ENCODE measurements at regions of chr4 and their contacts with region 1.

Region 1: DNA sequence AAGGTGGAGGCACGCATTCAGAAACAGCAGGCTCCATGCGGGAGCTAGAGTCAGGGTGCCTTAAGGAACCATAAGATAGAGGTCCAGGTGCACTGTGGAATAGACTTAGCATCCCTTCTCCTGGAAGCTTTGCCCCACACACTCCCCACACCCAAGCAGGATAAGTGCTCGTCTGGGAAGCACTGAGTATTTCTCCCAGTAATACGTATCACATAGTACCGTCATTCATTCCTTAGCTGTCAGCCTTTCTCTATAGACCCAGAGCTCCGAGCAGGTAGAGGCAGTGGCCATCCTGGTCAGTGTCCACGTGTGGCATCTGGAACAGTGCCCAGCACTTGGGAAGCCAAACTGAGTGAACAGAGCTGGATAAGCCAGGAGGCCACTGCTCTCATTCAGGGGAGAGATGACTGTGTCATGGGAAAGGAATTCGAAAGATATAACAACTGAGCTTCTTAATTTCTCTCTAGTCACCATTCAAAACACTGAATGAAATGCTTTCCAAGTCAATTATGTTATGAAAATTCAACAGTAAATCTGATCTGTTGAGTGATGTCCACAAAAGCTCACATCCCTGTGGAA is 9.9 kb downstream of the APBB2 start:
- DNase-seq: peak; percentile 64 to 89
- H3K4me3 ChIP-seq: no peak overlapping the region
- H3K27ac ChIP-seq: peak overlapping the region; percentile 44; the same call in 1 of the 2 replicates
- H3K4me1 ChIP-seq: peaks cover 12% of the 10 kb centered on the region
- H3K27me3 ChIP-seq: no peaks in the 10 kb centered on the region
- CTCF ChIP-seq: no peak

Region 2: DNA sequence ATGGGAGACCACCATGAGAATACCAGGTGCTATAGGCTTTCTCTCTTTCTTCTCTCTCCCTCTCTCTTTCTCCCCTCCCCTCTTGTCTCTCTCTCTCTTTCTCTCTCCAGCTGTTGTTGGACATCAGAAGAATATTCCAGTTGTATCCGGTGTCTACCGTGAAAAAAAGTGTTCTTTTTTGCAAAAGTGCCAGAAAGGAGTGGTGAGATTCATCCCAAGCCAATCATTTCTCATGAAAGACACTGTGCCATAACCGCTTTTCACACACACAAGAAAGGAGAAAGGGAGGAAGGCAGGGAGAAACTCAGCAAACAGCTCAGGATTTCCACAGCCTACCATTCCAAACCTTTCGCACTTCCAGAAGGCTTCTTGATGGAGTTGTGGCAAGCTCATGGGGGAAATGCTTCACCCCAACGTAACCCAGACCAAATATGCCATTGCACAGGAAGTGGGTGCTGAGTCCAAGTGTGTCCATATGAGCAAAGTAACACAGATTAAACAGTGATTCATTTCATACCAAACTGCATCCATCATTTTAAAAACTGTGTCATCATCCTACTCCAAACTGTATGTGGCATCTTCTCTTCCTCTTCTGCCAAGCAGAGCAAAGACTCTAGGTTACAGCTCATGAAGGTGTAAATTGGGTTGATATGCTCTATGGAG is 214.1 kb before region 1 on chr4:
- CTCF ChIA-PET with region 1: no interaction called
- POLR2A ChIA-PET with region 1: interaction called, 20 read pairs
- intact Hi-C with region 1: no loop called
- DNase-seq: peak; percentile 45 to 85
- H3K4me3 ChIP-seq: no peak overlapping the region
- H3K27ac ChIP-seq: peak overlapping the region; percentile 92
- H3K4me1 ChIP-seq: peaks cover 39% of the 10 kb centered on the region
- H3K27me3 ChIP-seq: no peaks in the 10 kb centered on the region
- CTCF ChIP-seq: no peak

Region 3: DNA sequence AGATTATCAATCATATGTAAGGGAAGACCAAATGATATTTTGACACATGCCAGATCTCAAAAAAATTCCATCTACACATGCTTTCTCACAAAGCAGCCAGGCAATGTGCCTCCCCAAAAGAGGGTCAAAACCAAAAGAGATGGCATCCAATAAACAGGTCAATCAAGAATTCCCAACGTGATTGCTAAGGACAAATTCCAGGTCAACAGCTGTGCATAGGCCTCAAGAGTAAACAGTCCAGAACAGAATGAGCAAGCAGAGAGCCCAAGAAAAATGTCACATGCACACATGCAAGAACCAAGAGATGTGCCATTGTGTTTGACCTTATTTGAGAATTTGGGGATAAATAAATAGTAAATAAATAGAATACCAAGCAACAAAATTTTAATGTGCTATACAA is 126.9 kb before region 1 on chr4:
- CTCF ChIA-PET with region 1: no interaction called
- POLR2A ChIA-PET with region 1: interaction called, 14 read pairs
- intact Hi-C with region 1: no loop called
- DNase-seq: no peak
- H3K4me3 ChIP-seq: no peak overlapping the region
- H3K27ac ChIP-seq: no peak overlapping the region
- H3K4me1 ChIP-seq: no peaks in the 10 kb centered on the region
- H3K27me3 ChIP-seq: no peaks in the 10 kb centered on the region
- CTCF ChIP-seq: no peak

Region 4: DNA sequence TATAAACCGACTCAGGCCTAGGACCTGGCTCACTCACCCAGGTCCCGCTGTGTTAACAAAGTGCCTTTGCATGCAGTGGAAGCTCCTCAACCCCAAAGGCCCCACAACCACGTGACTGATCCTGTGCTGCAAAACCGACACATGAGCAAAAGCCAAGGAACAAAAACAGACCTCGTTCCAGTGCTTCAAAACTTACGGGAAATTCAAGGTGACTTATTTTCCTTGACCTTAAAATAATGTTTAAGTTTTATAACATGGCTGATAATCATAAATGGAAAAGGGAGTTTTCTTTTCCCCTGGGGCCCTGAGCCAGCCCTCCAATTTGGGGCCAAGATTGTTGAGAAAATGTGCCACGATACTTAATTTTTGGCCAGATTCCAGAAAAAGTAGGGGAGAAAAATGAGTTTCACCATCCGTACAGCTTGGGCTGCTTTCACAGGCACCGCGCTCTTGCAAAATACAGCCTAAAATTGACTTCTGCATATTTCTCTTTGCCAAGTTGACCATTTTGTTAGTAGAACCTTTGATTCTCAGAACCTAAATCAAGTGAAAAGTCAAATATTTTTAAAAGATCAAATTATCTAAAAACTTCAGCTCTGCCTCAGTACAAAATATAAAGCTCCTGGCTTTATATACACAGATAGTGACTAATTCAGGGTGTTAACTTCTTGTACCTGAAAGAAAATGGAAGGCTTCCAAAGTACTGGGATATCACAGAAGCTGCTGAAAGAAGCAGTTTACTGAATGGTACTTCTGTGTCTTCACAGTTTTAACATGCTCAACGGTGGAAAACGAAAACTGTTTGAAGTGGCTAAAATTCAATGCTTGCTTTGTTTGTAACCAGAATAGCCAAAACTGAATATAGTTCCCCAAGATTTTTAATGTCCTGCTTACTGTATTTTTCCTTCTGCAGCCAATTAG is 83.9 kb before region 1 on chr4:
- CTCF ChIA-PET with region 1: no interaction called
- POLR2A ChIA-PET with region 1: no interaction called
- intact Hi-C with region 1: loop called (anchors 10 kb)
- DNase-seq: no peak
- H3K4me3 ChIP-seq: no peak overlapping the region
- H3K27ac ChIP-seq: no peak overlapping the region
- H3K4me1 ChIP-seq: no peaks in the 10 kb centered on the region; the same call in 1 of the 2 replicates
- H3K27me3 ChIP-seq: no peaks in the 10 kb centered on the region
- CTCF ChIP-seq: no peak

Region 5: DNA sequence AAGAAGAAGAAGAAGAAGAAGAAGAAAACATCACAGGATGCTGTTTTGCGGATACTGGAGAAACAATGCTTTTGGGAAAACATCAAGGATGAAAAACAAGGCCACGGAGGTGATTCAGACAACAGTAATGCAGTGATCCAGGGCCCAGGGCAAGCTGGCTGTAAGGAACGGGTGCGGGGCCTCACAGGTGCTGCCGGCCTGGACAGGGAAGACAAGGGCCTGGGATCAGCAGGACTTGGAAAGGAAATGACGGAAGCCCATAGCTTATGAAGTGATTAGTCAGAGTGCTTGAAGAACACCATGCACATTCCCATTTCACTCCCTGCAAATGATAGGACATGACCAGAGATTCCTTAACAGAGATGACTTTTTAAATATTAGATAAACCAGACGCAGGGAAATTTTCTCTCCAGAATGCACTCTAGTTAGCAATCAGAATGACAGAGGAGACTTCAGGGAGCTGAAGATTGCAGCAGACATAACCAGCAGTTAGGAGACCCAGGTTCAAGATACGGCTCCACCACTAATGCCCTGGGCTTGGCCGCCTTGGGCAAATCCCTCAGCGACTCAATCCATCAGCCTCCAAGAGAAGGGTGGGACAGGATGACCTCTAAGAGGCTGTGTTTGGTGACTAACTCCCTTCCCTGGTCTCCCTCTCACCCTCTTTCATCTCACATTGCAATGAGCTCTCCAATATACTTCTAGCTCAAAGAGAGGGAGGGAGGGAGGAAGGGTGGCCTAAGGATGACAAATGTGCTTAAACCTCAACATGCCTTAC is 44.3 kb before region 1 on chr4:
- CTCF ChIA-PET with region 1: interaction called, 3 read pairs
- POLR2A ChIA-PET with region 1: interaction called, 3 read pairs
- intact Hi-C with region 1: loop called (anchors 2 kb)
- DNase-seq: peak; percentile 83 to 85
- H3K4me3 ChIP-seq: no peak overlapping the region; the same call in 1 of the 2 replicates
- H3K27ac ChIP-seq: peak overlapping the region; percentile 80
- H3K4me1 ChIP-seq: peaks cover 27% of the 10 kb centered on the region
- H3K27me3 ChIP-seq: no peaks in the 10 kb centered on the region
- CTCF ChIP-seq: no peak

Region 6: GRCh38 chr4:41185614-41186597 is 18.6 kb before region 1 on chr4:
- CTCF ChIA-PET with region 1: interaction called, 3 read pairs
- POLR2A ChIA-PET with region 1: interaction called, 4 read pairs
- intact Hi-C with region 1: loop called (anchors 2 kb)
- DNase-seq: peak; percentile 24 to 90
- H3K4me3 ChIP-seq: 0 out of 2 replicates have a peak overlapping the region, but pooled peaks have one; percentile 15
- H3K27ac ChIP-seq: peak overlapping the region; percentile 67
- H3K4me1 ChIP-seq: peaks cover 38% of the 10 kb centered on the region
- H3K27me3 ChIP-seq: no peaks in the 10 kb centered on the region
- CTCF ChIP-seq: no peak